CD4-positive, alpha-beta T cell (primary cell): ENCODE measurements at regions of chr6 and their contacts with region 1.

Region 1: DNA sequence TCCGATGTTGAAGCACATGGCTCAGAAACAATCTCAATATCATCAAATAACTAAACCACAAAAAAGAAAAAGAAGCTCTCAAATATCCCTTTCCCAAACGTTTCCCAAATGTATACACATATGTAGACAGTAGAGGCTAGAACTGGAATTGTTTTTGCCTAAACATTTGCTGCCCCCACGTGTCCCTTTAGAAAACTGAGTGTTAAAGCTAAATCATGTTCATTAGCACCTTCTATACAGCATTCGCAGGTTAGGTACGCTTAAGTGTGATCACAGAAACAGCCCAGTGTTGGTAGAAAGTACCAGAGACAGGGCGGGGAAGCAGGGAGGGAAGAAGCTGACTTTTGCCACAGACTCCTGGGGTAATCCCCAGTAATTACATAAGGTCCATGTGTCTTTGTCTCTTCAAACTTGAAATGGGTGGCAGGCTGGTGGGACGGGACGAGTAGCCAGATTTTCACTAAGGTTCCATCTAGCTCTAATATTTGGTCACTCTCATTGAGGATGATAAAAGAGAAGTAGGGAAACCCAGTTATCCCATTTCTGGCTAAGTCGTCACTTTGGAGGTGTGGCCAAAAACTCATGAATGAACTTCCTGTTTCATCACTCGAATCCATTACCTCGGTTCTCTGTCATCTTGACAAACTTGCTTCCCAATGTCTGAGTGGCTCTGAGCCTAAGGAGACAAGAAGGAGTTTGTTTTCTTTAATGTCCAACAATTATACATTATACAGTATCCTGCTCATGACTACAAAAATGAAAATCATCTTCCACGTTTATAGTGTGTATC is 15.0 kb upstream of the TFAP2A start:
- DNase-seq: peak in 3 of 14 experiments; percentile 14 to 35 (median 16)
- ATAC-seq: peak; percentile 17
- H3K4me3 ChIP-seq: no peak overlapping the region
- H3K4me3 Mint-ChIP-seq: peak overlapping the region; percentile 35
- H3K27ac ChIP-seq: no peak overlapping the region
- H3K27ac Mint-ChIP-seq: no peak overlapping the region
- H3K4me1 ChIP-seq: peaks cover 18% of the 10 kb centered on the region
- H3K4me1 Mint-ChIP-seq: peaks cover 23% of the 10 kb centered on the region
- H3K27me3 ChIP-seq: peaks cover 22 to 58% of the 10 kb centered on the region in 2 experiments
- H3K27me3 Mint-ChIP-seq: peaks cover 70% of the 10 kb centered on the region
- CTCF ChIP-seq: no peak

Region 2: DNA sequence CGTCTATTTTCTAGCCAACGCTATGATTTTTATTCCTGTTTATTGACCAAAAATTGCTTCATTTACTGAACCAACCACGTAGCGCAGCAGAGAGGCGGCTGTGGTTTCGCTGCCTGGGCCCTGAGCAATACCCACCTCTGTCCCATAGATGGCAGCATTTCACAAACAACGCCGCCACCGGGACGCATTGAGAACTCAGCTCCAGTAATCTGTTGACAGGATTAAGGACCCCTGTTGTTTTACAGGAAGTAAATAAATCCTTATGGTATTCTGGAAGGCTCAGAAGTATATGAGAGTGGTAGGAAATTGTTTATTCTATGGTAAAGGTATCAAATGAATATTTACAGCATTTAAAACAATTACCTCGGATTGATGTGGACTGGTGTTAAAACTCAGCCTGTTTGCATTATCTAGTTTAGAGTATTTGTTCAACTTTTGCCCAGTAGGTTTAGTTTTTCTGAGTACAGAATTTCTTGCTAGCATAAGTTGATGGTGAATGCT is 1446.6 kb before region 1 on chr6:
- CTCF ChIA-PET with region 1: interaction called, 5 read pairs
- POLR2A ChIA-PET with region 1: no interaction called
- intact Hi-C with region 1: loop called (anchors 1 to 2 kb)
- DNase-seq: peak; percentile 12 to 62 (median 25)
- ATAC-seq: peak; percentile 87
- H3K4me3 ChIP-seq: no peak overlapping the region
- H3K4me3 Mint-ChIP-seq: no peak overlapping the region
- H3K27ac ChIP-seq: no peak overlapping the region
- H3K27ac Mint-ChIP-seq: no peak overlapping the region
- H3K4me1 ChIP-seq: peaks cover 2% of the 10 kb centered on the region
- H3K4me1 Mint-ChIP-seq: no peaks in the 10 kb centered on the region
- H3K27me3 ChIP-seq: peaks cover 0 to 7% of the 10 kb centered on the region in 2 experiments
- H3K27me3 Mint-ChIP-seq: peaks cover 44% of the 10 kb centered on the region
- CTCF ChIP-seq: peak; percentile 99

Region 3: DNA sequence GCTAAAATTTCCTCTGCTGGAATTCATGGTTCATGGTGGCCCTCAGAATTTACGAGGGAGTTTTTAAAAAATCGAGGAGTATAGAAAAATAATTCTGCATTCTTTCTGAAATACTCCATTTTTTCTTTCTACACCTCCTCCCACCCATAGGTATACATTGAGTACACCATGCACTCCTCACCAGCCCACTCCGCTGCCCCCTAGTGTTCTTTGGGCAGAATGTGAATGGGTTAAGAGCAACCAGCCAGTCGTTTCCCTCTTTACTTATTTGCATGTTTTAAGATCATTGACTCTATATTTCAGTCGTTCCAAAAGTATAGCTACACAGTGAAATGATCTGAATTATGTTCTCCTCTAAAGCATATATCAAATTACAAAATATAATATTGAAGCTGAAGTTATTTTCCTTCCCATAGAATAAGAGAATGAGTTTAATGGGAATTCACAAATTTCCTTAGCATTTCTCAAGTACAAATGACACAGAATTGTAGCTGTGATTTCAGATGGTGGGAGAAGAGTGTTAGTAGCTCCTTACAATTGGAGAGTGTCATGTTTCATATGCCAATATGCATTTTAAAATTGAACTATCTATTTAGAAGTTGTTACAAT is 1016.8 kb before region 1 on chr6:
- CTCF ChIA-PET with region 1: no interaction called
- POLR2A ChIA-PET with region 1: no interaction called
- intact Hi-C with region 1: loop called (anchors 10 kb)
- DNase-seq: peak in 2 of 14 experiments; percentile 1 to 11
- ATAC-seq: no peak
- H3K4me3 ChIP-seq: no peak overlapping the region
- H3K4me3 Mint-ChIP-seq: no peak overlapping the region
- H3K27ac ChIP-seq: no peak overlapping the region
- H3K27ac Mint-ChIP-seq: no peak overlapping the region
- H3K4me1 ChIP-seq: no peaks in the 10 kb centered on the region
- H3K4me1 Mint-ChIP-seq: no peaks in the 10 kb centered on the region
- H3K27me3 ChIP-seq: no peaks in the 10 kb centered on the region
- H3K27me3 Mint-ChIP-seq: peaks cover 5% of the 10 kb centered on the region
- CTCF ChIP-seq: peak; percentile 53

Region 4: GRCh38 chr6:9540534-9541126 is 889.2 kb before region 1 on chr6:
- CTCF ChIA-PET with region 1: no interaction called
- POLR2A ChIA-PET with region 1: no interaction called
- intact Hi-C with region 1: loop called (anchors 2 to 10 kb)
- DNase-seq: peak in 2 of 14 experiments; percentile 10 to 18
- ATAC-seq: no peak
- H3K4me3 ChIP-seq: no peak overlapping the region
- H3K4me3 Mint-ChIP-seq: no peak overlapping the region
- H3K27ac ChIP-seq: no peak overlapping the region
- H3K27ac Mint-ChIP-seq: no peak overlapping the region
- H3K4me1 ChIP-seq: no peaks in the 10 kb centered on the region
- H3K4me1 Mint-ChIP-seq: no peaks in the 10 kb centered on the region
- H3K27me3 ChIP-seq: no peaks in the 10 kb centered on the region
- H3K27me3 Mint-ChIP-seq: peaks cover 6% of the 10 kb centered on the region
- CTCF ChIP-seq: peak; percentile 43

Region 5: DNA sequence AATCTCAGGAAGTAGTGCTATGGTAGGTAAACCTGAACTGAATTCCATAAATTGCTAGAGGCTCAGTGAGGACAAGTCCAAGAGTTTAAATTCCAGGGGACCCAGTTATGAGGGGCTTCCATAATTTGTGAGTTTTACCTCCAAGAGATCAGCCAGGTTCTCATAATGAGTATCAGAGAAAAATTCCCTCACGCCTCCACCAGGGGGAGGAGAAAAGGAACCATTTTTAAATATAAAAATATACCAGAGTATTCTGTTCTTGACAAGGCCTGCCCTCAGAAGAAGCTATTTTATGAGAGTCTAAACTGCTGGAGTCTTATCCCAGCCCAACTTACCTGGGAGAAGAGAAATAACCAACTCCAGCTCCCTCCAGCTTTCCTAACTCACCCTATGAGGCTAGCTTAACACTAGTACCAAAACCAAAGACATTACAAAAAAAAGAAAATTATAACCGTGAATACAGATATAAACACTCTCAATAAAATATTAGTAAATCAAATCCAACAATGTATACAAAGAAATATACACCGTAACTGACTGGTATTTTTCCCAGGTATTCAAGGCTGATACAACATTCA is 173.6 kb before region 1 on chr6:
- CTCF ChIA-PET with region 1: no interaction called
- POLR2A ChIA-PET with region 1: no interaction called
- intact Hi-C with region 1: loop called in 1 of 2 experiments (anchors 10 kb)
- DNase-seq: no peak
- ATAC-seq: no peak
- H3K4me3 ChIP-seq: no peak overlapping the region
- H3K4me3 Mint-ChIP-seq: no peak overlapping the region
- H3K27ac ChIP-seq: no peak overlapping the region
- H3K27ac Mint-ChIP-seq: no peak overlapping the region
- H3K4me1 ChIP-seq: no peaks in the 10 kb centered on the region
- H3K4me1 Mint-ChIP-seq: no peaks in the 10 kb centered on the region
- H3K27me3 ChIP-seq: peaks cover 0 to 4% of the 10 kb centered on the region in 2 experiments
- H3K27me3 Mint-ChIP-seq: peaks cover 4% of the 10 kb centered on the region
- CTCF ChIP-seq: no peak